Heart left ventricle (tissue), 16 donors: ENCODE measurements at regions of chr5 and their contacts with region 1.

Region 1: GRCh38 chr5:44952376-44952775 is 143.6 kb downstream of the MRPS30 start:
- DNase-seq: no peak
- ATAC-seq: no peak
- H3K4me3 ChIP-seq: no peak overlapping the region
- H3K27ac ChIP-seq: no peak overlapping the region
- H3K4me1 ChIP-seq: no peaks in the 10 kb centered on the region
- H3K27me3 ChIP-seq: no peaks in the 10 kb centered on the region
- CTCF ChIP-seq: peak; percentile 29 to 63 (median 48)
- POLR2A ChIP-seq: no peak

Region 2: DNA sequence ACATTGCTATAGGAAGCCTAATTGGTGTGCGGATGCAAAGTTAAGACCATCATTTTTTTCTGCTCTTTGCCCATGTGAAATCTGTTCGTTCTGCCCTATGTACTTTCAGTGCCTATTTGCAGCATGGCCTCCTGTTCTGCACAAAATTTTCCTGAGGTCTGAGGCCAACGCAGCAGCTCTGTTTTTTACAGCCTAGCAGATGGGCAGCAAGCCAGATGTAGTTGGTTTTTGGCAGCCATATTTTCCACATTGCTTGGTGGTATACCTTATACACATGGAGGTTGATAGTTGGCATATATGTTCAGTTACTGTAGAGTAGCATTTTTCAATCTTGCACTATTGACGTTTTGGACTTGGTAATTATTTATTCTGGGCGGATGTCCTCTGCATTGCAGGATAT is 277.1 kb before region 1 on chr5:
- intact Hi-C with region 1: no loop called
- DNase-seq: no peak
- ATAC-seq: no peak
- H3K4me3 ChIP-seq: no peak overlapping the region
- H3K27ac ChIP-seq: no peak overlapping the region
- H3K4me1 ChIP-seq: no peaks in the 10 kb centered on the region
- H3K27me3 ChIP-seq: no peaks in the 10 kb centered on the region
- CTCF ChIP-seq: no peak
- POLR2A ChIP-seq: no peak

Region 3: GRCh38 chr5:45521067-45521466 is 568.7 kb after region 1 on chr5:
- intact Hi-C with region 1: loop called in 1 of 10 experiments (anchors 10 kb)
- DNase-seq: peak in 2 of 5 donors; percentile 19 to 23
- ATAC-seq: peak in 3 of 4 donors; percentile 53 to 63 (median 60)
- H3K4me3 ChIP-seq: no peak overlapping the region
- H3K27ac ChIP-seq: no peak overlapping the region
- H3K4me1 ChIP-seq: no peaks in the 10 kb centered on the region
- H3K27me3 ChIP-seq: no peaks in the 10 kb centered on the region
- CTCF ChIP-seq: peak; percentile 9 to 57 (median 45)
- POLR2A ChIP-seq: no peak

Region 4: DNA sequence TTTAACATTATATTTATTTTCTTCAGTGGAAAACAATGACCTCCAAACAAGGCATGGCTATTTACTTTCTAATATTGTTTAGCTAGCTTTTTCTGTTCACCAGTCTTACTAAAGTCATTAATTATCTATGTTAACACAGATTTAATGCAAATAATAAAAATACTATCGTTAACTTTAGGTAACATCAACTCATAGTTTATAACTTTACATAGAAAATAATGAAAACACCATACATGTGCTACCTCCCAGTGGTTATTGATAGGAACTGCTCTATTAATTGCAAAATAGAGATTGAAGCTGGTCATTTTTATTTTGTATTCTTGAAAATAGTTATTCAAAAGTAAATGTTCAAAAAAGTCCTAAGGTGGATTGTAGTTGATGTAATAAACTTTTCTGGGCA is 822.2 kb after region 1 on chr5:
- intact Hi-C with region 1: loop called in 1 of 10 experiments (anchors 10 kb)
- DNase-seq: no peak
- ATAC-seq: no peak
- H3K4me3 ChIP-seq: no peak overlapping the region
- H3K27ac ChIP-seq: no peak overlapping the region
- H3K4me1 ChIP-seq: no peaks in the 10 kb centered on the region
- H3K27me3 ChIP-seq: no peaks in the 10 kb centered on the region
- CTCF ChIP-seq: peak in 8 of 12 donors; percentile 22 to 41 (median 32)
- POLR2A ChIP-seq: no peak